AG04450 (cell line): ENCODE measurements at regions of chr15 and their contacts with region 1.

Region 1: DNA sequence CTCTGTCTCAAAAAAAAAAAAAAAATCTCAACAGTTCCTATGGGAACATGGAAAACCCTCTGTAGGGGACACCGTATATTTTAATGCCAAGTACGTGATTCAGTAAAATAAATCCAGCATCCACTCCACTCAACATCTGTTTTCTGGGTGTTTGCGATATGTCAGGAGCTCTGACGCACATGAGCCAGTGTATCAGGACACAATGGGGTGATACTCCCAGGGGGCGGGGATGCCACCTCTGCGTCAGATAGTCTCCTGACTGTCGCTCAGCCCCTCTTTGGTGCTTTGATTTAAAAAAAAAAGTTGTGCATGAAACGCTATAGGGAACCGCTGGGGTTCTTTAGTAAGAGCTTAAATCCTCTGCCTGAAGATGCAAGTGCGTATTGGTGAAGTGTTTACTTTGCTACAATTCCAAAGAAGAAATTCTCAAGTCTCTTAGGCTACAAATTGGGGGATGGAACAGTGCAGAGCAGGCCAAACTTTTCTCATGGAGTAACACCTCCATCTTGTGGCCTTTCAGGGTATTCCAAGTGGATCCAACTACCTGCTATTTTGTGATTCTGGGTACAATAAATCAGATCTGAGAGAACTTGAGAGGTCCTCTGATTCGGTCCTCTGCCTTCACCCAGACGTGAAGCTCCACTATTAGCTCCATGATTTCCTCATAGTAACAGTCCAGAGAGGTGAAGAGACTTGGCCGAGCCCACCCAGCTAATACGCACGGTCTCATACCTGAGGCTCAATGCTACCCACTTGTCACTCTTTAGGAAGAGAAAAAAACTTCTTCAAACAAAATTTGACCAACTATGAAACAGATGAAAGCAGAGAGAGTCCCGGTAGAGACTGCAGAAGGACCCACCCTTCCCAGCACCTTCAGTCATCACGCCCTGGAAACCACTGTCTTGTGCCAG is 9.3 kb upstream of the NR2E3 start:
- DNase-seq: peak; percentile 67
- H3K4me3 ChIP-seq: no peak overlapping the region; the same call in 1 of the 2 replicates
- H3K27ac ChIP-seq: peak overlapping the region; percentile 59
- H3K27me3 ChIP-seq: no peaks in the 10 kb centered on the region
- CTCF ChIP-seq: peak; percentile 88

Region 2: GRCh38 chr15:70974004-70974832 is 826.9 kb before region 1 on chr15:
- CTCF ChIA-PET with region 1: interaction called, 11 read pairs
- POLR2A ChIA-PET with region 1: no interaction called
- DNase-seq: peak; percentile 36
- H3K4me3 ChIP-seq: no peak overlapping the region
- H3K27ac ChIP-seq: no peak overlapping the region
- H3K27me3 ChIP-seq: no peaks in the 10 kb centered on the region
- CTCF ChIP-seq: peak; percentile 51

Region 3: GRCh38 chr15:71451130-71451529 is 350.0 kb before region 1 on chr15:
- CTCF ChIA-PET with region 1: interaction called, 13 read pairs
- POLR2A ChIA-PET with region 1: no interaction called
- DNase-seq: no peak
- H3K4me3 ChIP-seq: no peak overlapping the region
- H3K27ac ChIP-seq: no peak overlapping the region
- H3K27me3 ChIP-seq: no peaks in the 10 kb centered on the region
- CTCF ChIP-seq: no peak

Region 4: DNA sequence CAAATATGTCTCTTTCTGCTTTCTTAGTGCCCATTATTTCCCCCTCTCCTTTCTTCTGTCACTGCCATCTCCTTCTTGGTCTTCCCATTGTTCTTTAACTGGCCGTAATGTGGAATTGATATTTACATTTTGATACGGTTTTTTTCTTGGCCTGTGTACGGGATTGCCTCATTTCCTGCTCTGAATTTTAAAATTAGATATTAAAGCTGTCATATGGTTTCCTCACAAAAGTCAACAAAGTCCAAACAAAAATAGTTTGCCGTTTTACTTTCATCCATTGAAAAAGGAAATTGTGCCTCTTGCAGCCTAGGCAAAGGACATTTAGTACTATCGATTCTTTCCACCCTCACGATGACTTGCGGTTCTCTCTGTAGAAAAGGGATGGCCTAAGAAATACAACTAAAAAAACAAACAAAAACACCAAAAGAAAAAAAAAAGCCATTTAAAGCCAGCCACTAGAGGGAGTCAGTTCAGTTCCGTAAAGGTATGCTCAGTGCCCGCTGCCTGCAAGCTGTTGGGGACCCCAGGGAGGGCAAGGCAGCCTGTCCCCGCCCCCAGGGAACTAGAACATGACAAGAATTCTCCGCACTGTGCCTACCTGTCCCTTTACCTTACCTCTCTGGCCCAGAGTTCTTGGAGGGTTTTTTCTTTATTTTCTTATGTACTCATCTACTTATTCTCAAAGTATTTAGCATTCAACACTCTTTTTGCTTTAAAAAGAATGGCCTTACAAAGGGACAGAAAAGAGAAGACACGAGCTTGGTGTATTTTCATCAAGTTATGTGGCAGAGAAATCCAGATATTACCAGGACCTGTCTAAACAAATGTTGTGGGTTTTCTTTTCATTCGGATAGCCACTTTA is 20.7 kb before region 1 on chr15:
- CTCF ChIA-PET with region 1: interaction called, 14 read pairs
- POLR2A ChIA-PET with region 1: no interaction called
- DNase-seq: no peak
- H3K4me3 ChIP-seq: no peak overlapping the region
- H3K27ac ChIP-seq: no peak overlapping the region
- H3K27me3 ChIP-seq: no peaks in the 10 kb centered on the region
- CTCF ChIP-seq: peak; percentile 82

Region 5: GRCh38 chr15:72155635-72156616 is 354.8 kb after region 1 on chr15:
- CTCF ChIA-PET with region 1: interaction called, 17 read pairs
- POLR2A ChIA-PET with region 1: no interaction called
- DNase-seq: peak; percentile 48
- H3K4me3 ChIP-seq: peak overlapping the region; percentile 60
- H3K27ac ChIP-seq: peak overlapping the region; percentile 21
- H3K27me3 ChIP-seq: peaks cover under 1% of the 10 kb centered on the region
- CTCF ChIP-seq: peak; percentile 92